Activated CD4-positive, alpha-beta T cell treated with anti-CD3 and anti-CD28 coated beads, Interleukin-2, amount 10 ng/mL, durations not matched to agents 7 days and 5 days (primary cell): ENCODE measurements at regions of chr4 and their contacts with region 1.

Region 1: GRCh38 chr4:40238700-40239548 is 42.1 kb downstream of the RHOH start:
- DNase-seq: peak; percentile 83
- H3K4me3 Mint-ChIP-seq: peak overlapping the region; percentile 58
- H3K27ac Mint-ChIP-seq: peak overlapping the region; percentile 81
- H3K4me1 Mint-ChIP-seq: peaks cover 91% of the 10 kb centered on the region
- H3K27me3 Mint-ChIP-seq: no peaks in the 10 kb centered on the region

Region 2: DNA sequence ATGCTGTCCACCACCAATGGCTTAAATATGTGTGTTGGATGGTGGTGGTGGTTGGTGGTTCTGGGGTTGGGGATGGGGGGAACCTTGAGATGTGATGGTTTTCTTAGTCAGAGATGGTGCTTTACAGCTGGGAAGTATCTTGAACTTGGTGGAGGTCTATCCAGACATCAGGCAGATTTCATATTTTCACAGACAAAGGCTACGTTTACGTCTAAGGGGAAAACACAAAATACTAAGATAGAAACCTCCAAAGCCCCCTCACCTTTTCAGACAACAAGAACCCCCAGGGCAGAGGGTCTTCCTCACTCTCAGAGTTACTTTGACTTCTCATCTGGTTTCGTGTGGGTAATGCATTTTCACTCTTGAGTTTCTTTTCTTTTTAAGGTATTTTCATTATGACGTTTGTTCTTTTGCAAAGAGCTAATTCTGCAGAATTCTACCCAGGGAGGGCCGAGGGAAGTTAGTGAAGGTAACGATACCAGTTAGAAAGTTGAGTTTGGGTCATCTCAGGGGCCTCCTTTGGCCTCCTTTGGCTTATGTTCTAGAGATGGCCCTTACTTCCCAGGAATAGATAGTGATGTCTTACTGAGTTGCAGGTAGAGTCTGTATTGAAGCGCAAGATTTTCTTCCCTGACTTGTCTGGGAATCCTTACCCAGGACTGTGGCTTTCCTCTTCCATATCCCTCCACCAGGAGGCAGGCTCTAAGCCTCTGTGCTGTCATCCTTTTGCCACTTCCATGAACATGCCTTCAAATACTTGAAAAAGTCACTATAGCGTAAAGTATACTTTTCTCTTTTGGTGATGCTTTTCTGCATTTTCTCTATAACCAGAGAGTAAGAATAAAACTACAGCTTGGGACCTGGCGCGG is 10.2 kb before region 1 on chr4:
- CTCF ChIA-PET with region 1: interaction called, 21 read pairs
- POLR2A ChIA-PET with region 1: interaction called, 6 read pairs
- DNase-seq: no peak
- H3K4me3 Mint-ChIP-seq: peak overlapping the region; percentile 59
- H3K27ac Mint-ChIP-seq: peak overlapping the region; percentile 86
- H3K4me1 Mint-ChIP-seq: peaks cover 91% of the 10 kb centered on the region
- H3K27me3 Mint-ChIP-seq: no peaks in the 10 kb centered on the region